ENCODE measurements at regions of chr6 and their contacts with region 1.

Region 1: DNA sequence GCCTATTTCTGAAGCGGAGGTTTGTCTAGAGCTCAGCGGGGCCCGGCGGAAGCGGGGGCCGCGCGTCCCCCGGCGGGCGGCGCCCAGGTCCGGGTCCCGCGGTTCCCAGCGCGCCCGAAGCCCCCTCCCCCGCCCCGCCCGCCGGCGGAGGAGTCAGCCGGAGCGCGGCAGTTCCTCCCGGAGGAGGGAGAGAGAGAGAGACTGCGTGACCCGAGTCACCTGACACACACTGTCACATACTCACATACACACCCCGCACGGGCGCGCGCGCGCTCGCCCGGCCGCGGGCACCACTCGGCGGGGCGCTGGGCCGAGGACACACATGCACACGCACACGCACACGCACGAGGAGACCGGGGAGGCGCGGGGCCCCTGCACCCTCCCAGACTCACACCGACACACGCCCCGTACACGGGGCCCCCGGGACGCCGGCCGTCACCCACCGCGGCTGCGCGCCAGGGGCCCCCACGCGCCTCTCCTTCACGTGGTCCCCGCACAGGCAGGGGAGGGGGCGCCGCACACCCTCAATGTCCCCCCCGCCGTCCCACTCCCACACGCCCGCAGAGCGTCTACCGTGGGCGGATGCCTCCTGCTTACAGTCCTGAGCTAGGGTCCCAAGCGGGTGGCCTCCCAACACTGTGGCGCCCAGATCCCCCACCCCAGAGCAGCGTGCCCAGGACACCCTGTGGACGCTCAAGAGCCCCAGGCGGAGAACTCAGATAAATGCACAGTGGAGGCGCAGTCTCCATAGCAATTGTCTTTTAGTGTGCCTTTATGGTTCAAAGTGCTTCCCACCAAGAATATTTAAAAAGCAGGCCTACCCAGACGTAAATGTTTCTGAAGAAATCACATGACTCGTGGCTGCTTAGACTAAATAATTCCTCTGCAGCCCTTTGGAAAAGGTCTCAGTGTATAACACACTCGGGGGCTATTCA is at the start of gene RRAGD:
- DNase-seq: peak; percentile 73 to 88
- ATAC-seq: peak; percentile 84 to 90 (median 89)
- H3K4me3 ChIP-seq: peak within 1 kb of the TSS; percentile 90
- H3K27ac ChIP-seq: peak within 1 kb of the TSS; percentile 99
- H3K4me1 ChIP-seq: peaks cover 37% of the 10 kb centered on the region
- H3K27me3 ChIP-seq: no peaks in the 10 kb centered on the region
- CTCF ChIP-seq: no peak
- total RNA-seq, gene RRAGD: 105 to 148 (median 125) TPM

Region 2: GRCh38 chr6:89387516-89388222 is 24.7 kb before region 1 on chr6:
- intact Hi-C with region 1: loop called in 1 of 2 experiments (anchors 2 kb)
- DNase-seq: peak in 1 of 2 donors; percentile 50
- ATAC-seq: peak; percentile 53 to 90 (median 81)
- H3K4me3 ChIP-seq: no peak overlapping the region
- H3K27ac ChIP-seq: peak overlapping the region; percentile 88
- H3K4me1 ChIP-seq: peaks cover 59% of the 10 kb centered on the region
- H3K27me3 ChIP-seq: no peaks in the 10 kb centered on the region
- CTCF ChIP-seq: no peak

Region 3: DNA sequence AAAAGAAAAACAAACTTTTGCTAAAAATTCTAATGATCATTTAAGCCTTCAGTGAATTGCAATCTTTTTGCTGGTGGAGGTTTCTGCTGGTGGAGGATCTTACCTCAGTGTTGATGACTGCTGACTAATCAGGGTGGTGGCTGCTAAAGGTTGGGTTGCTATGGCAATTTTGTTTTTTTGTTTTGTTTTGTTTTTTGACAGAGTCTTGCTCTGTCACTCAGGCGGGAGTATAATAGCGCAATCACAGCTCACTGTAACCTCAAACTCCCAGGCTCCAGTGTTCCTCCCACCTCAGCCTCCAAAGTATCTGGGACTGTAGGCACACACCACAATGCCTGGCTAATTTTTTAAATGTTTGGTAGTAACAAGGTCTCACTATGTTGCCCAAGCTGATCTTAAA is 115.3 kb after region 1 on chr6:
- intact Hi-C with region 1: no loop called
- DNase-seq: no peak
- ATAC-seq: no peak
- H3K4me3 ChIP-seq: no peak overlapping the region
- H3K27ac ChIP-seq: no peak overlapping the region
- H3K4me1 ChIP-seq: peaks cover 19% of the 10 kb centered on the region
- H3K27me3 ChIP-seq: no peaks in the 10 kb centered on the region
- CTCF ChIP-seq: no peak

Region 4: GRCh38 chr6:89562118-89562973 is 150.0 kb after region 1 on chr6:
- intact Hi-C with region 1: no loop called
- DNase-seq: no peak
- ATAC-seq: peak; percentile 46 to 80 (median 60)
- H3K4me3 ChIP-seq: peak overlapping the region; percentile 60
- H3K27ac ChIP-seq: no peak overlapping the region
- H3K4me1 ChIP-seq: peaks cover 3% of the 10 kb centered on the region
- H3K27me3 ChIP-seq: no peaks in the 10 kb centered on the region
- CTCF ChIP-seq: no peak